SK-N-SH (cell line): ENCODE measurements at regions of chr1 and their contacts with region 1.

Region 1: GRCh38 chr1:71080739-71081696 is at the start of gene ZRANB2:
- DNase-seq: peak; percentile 81
- H3K4me3 ChIP-seq: peak within 1 kb of the TSS; percentile 93 to 96
- H3K27ac ChIP-seq: peak within 1 kb of the TSS; percentile 86 to 97
- H3K4me1 ChIP-seq: peaks cover 8 to 13% of the 10 kb centered on the region in 2 experiments; a peak in 3 of 4 replicates
- H3K27me3 ChIP-seq: no peaks in the 10 kb centered on the region
- CTCF ChIP-seq: peak; percentile 77
- EP300 ChIP-seq: peak; percentile 22 to 43; a peak in 2 of 4 replicates
- RAD21 ChIP-seq: no peak
- polyA plus RNA-seq, gene ZRANB2: 45.2 and 69.2 TPM in 2 replicates

Region 2: DNA sequence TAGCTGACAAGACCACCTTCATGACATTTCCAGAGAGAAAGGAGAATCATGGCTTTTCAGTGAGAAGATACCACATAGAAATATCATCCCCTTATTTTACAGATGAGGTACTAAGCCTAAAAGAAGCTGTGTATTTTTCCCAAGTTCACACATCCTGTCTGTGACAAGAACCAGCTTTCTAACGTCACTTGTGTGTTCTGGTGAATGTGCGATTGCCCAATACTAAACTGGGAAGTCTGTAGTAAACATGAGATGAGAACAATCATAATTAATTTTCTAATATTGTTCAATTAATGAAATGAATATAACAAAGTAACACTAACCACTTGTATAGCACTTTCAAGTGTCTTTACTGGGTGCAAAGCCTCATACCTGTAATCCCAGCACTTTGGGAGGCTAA is 79.4 kb before region 1 on chr1:
- CTCF ChIA-PET with region 1: no interaction called
- POLR2A ChIA-PET with region 1: no interaction called
- DNase-seq: no peak
- H3K4me3 ChIP-seq: no peak overlapping the region
- H3K27ac ChIP-seq: no peak overlapping the region
- H3K4me1 ChIP-seq: no peaks in the 10 kb centered on the region
- H3K27me3 ChIP-seq: no peaks in the 10 kb centered on the region
- CTCF ChIP-seq: no peak
- EP300 ChIP-seq: no peak
- RAD21 ChIP-seq: no peak

Region 3: DNA sequence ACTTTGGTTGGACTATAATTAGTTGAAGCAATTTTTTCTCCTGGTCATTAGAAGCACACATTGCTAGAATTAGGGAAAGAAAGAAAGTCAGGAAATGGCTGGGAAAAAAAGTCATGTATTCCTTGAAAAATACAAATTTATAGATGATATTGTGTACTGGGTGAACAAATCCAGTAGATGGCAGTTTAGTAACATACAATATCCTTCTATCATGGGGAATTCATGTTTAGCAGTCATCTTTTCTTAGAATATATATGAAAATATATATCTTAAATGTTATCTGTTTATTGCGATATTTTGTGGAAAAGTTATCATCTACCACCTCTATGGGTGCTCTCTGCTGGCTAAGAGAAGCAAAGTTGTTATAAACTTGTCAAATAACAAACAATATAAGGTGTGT is 12.9 kb after region 1 on chr1:
- CTCF ChIA-PET with region 1: interaction called, 11 read pairs
- POLR2A ChIA-PET with region 1: no interaction called
- DNase-seq: peak; percentile 15
- H3K4me3 ChIP-seq: no peak overlapping the region
- H3K27ac ChIP-seq: no peak overlapping the region
- H3K4me1 ChIP-seq: peaks cover 0 to 13% of the 10 kb centered on the region in 2 experiments; a peak in 1 of 4 replicates
- H3K27me3 ChIP-seq: no peaks in the 10 kb centered on the region
- CTCF ChIP-seq: peak; percentile 60
- EP300 ChIP-seq: no peak
- RAD21 ChIP-seq: peak; percentile 77

Region 4: DNA sequence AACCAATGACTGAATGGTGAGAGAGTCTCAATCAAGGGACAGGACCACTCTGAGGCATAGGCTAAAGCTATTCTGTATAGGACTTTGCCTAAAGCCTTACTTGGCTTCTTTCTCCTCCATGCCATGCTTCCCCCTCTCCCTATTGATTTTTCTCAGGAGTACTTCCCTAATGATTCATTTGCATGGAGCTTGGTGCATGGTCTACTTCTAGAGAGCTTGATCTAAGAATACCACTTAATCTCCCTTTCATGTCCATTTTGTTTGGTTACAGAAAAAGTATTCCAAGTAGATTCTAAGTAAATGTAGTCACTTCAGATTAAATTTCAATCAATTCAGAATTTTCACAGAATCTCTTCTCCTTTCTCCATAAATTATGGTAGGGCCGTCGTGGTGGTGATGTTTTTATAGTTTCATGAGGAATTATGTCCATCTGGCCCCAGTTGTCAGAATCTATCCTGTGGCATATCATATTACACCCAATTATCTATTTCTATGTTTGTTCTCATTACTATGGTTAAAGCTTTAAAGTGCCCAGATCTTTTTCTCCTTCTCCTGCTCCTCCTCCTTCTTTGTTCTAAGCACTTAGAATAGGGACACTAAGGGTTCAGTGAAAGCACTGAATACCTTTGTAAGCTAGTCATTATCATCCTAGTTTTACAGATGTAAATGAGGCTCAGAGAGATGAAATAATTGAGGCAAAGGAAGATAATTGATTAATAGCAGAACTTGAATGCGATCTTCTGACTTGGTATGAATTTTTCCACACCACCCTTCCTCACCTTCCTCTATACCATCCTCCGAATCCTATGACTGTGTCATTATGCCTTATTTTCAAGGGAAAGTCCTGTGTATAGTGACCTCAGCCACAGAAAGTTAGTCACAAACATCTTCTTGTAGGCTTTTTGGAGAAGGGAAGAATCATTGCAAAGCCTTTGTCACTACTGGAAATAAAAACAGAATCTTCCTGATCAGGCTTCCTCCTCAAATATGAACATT is 85.5 kb after region 1 on chr1:
- CTCF ChIA-PET with region 1: no interaction called
- POLR2A ChIA-PET with region 1: no interaction called
- DNase-seq: no peak
- H3K4me3 ChIP-seq: no peak overlapping the region
- H3K27ac ChIP-seq: no peak overlapping the region
- H3K4me1 ChIP-seq: no peaks in the 10 kb centered on the region
- H3K27me3 ChIP-seq: no peaks in the 10 kb centered on the region
- CTCF ChIP-seq: no peak
- EP300 ChIP-seq: no peak
- RAD21 ChIP-seq: no peak